Esophagus muscularis mucosa (tissue), 4 donors: ENCODE measurements at regions of chr6 and their contacts with region 1.

Region 1: DNA sequence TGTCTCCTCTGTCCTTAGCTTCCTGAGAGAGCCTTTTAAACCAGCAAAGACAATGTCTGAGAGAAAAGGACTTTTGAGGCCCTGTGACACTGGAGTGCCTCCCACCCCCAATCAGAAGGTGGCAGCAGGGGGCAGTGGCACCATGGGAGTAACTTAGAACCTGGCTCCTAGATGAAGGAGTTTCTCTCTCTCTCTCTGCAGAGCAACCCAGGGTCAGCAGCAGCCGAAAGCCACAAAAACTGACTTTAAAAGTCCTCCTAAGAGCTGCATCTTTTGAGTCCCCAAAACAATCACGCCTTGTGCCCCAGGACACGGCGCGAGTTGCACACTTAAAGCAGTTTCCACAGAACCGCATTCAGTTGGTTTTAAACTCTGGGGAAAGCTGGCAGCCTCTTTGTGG is 5.3 kb upstream of the TCP11 start:
- DNase-seq: no peak
- H3K4me3 ChIP-seq: no peak overlapping the region
- H3K27ac ChIP-seq: no peak overlapping the region
- H3K4me1 ChIP-seq: peaks cover 0 to 19% (median 8%) of the 10 kb centered on the region in 4 donors
- H3K27me3 ChIP-seq: peaks cover 0 to under 1% (median 0%) of the 10 kb centered on the region in 4 donors
- CTCF ChIP-seq: peak; percentile 54 to 61 (median 57)
- EP300 ChIP-seq: no peak
- POLR2A ChIP-seq: no peak

Region 2: GRCh38 chr6:35024551-35025054 is 121.8 kb before region 1 on chr6:
- intact Hi-C with region 1: no loop called
- DNase-seq: no peak
- H3K4me3 ChIP-seq: peak overlapping the region in 3 of 4 donors; percentile 13 to 71 (median 27)
- H3K27ac ChIP-seq: peak overlapping the region; percentile 92 to 99 (median 96)
- H3K4me1 ChIP-seq: peaks cover 93 to 99% (median 98%) of the 10 kb centered on the region in 4 donors
- H3K27me3 ChIP-seq: no peaks in the 10 kb centered on the region
- CTCF ChIP-seq: peak in 1 of 3 experiments; percentile 2
- EP300 ChIP-seq: no peak
- POLR2A ChIP-seq: no peak

Region 3: GRCh38 chr6:35240840-35241801 is 94.7 kb after region 1 on chr6:
- intact Hi-C with region 1: loop called (anchors 2 kb)
- DNase-seq: no peak
- H3K4me3 ChIP-seq: no peak overlapping the region
- H3K27ac ChIP-seq: peak overlapping the region; percentile 25 to 60 (median 48)
- H3K4me1 ChIP-seq: peaks cover 28 to 72% (median 53%) of the 10 kb centered on the region in 4 donors
- H3K27me3 ChIP-seq: no peaks in the 10 kb centered on the region
- CTCF ChIP-seq: peak; percentile 92 to 97 (median 96)
- EP300 ChIP-seq: no peak
- POLR2A ChIP-seq: no peak

Region 4: GRCh38 chr6:35359751-35360348 is 213.4 kb after region 1 on chr6:
- intact Hi-C with region 1: no loop called
- DNase-seq: no peak
- H3K4me3 ChIP-seq: no peak overlapping the region
- H3K27ac ChIP-seq: peak overlapping the region in 2 of 4 donors; percentile 15 to 33
- H3K4me1 ChIP-seq: peaks cover 39 to 51% (median 45%) of the 10 kb centered on the region in 4 donors
- H3K27me3 ChIP-seq: no peaks in the 10 kb centered on the region
- CTCF ChIP-seq: no peak
- EP300 ChIP-seq: no peak
- POLR2A ChIP-seq: no peak